Endothelial cell of umbilical vein (primary cell): ENCODE measurements at regions of chr7 and their contacts with region 1.

Region 1: GRCh38 chr7:33716581-33717477 is 188.5 kb upstream of the BMPER start:
- DNase-seq: peak; percentile 84
- H3K4me3 ChIP-seq: no peak overlapping the region
- H3K27ac ChIP-seq: no peak overlapping the region
- H3K4me1 ChIP-seq: peaks cover 9% of the 10 kb centered on the region
- H3K27me3 ChIP-seq: no peaks in the 10 kb centered on the region
- CTCF ChIP-seq: peak; percentile 61 to 68
- POLR2A ChIP-seq: no peak

Region 2: GRCh38 chr7:33757562-33758165 is 40.8 kb after region 1 on chr7:
- CTCF ChIA-PET with region 1: interaction called, 8 read pairs
- POLR2A ChIA-PET with region 1: no interaction called
- dilution Hi-C with region 1: no loop called
- intact Hi-C with region 1: loop called (anchors 1 kb)
- DNase-seq: peak; percentile 58
- H3K4me3 ChIP-seq: no peak overlapping the region
- H3K27ac ChIP-seq: no peak overlapping the region
- H3K4me1 ChIP-seq: peaks cover 8% of the 10 kb centered on the region
- H3K27me3 ChIP-seq: no peaks in the 10 kb centered on the region
- CTCF ChIP-seq: peak; percentile 31 to 35
- POLR2A ChIP-seq: no peak

Region 3: DNA sequence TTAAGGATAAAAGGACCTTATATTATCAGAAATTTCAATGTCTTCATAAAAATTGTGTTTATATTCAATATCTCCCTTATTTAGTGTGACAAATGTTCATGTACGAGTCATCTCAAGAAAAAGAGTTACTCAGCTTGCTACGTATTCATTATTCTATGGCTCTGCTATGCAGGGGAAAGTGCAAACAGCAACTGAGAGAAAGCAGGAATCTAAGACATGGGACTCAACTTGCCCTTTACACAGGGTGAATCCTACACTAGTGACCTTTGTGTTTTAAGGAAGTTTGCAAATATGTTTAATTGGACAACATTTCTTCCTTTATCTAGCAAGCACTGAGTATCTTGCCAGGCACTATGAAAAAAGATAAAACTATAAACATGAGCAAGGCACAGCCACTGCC is 1045.9 kb after region 1 on chr7:
- CTCF ChIA-PET with region 1: no interaction called
- POLR2A ChIA-PET with region 1: no interaction called
- dilution Hi-C with region 1: no loop called
- intact Hi-C with region 1: no loop called
- DNase-seq: no peak
- H3K4me3 ChIP-seq: no peak overlapping the region
- H3K27ac ChIP-seq: no peak overlapping the region
- H3K4me1 ChIP-seq: no peaks in the 10 kb centered on the region
- H3K27me3 ChIP-seq: peaks cover 2 to 15% of the 10 kb centered on the region in 2 experiments
- CTCF ChIP-seq: no peak
- POLR2A ChIP-seq: no peak